ENCODE measurements at regions of chr15 and their contacts with region 1.

Region 1: DNA sequence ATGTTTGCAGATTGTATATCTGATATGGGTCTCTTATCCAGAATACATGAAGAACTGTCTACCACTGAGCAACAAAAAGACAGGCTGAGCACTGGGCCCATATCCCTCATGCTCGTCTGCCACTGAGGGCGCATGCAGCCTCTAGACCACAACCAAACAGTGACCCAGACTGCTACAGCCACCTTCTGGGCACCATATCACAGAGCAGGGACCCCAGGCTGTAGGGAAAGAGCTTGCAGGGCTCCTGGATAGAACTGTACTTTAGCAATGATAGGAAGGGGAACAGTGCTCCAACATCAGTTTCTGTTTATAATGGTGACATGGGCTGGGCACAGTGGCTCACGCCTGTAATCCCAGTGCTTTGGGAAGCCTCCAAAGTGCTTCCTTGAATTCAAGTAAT is 40.2 kb upstream of the TMEM87A start:
- DNase-seq: no peak
- H3K4me3 ChIP-seq: no peak overlapping the region
- H3K27ac ChIP-seq: no peak overlapping the region
- H3K4me1 ChIP-seq: no peaks in the 10 kb centered on the region
- H3K27me3 ChIP-seq: no peaks in the 10 kb centered on the region
- CTCF ChIP-seq: no peak
- POLR2A ChIP-seq: no peak

Region 2: DNA sequence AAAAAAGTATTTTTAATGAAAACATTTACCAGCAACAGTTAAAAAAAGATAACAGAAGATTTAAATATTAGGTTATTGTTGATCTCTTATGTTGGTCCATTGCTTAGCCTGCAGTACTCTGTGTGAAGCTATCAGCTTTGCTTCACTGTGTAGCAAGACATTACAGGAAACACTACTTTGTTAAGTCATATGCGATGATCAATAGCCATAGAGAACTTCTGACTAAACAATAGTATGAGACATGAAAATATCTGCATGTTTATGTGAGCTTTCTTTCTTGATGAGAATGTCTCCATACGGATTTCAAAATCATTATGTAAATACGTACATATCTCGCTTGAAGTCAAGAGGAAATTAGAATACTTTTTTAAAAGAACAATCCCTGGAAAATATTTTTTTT is 18.9 kb after region 1 on chr15:
- intact Hi-C with region 1: no loop called
- DNase-seq: no peak
- H3K4me3 ChIP-seq: no peak overlapping the region
- H3K27ac ChIP-seq: no peak overlapping the region
- H3K4me1 ChIP-seq: no peaks in the 10 kb centered on the region
- H3K27me3 ChIP-seq: no peaks in the 10 kb centered on the region
- CTCF ChIP-seq: no peak
- POLR2A ChIP-seq: no peak

Region 3: GRCh38 chr15:42344763-42345162 is 31.3 kb after region 1 on chr15:
- intact Hi-C with region 1: no loop called
- DNase-seq: no peak
- H3K4me3 ChIP-seq: no peak overlapping the region
- H3K27ac ChIP-seq: peak overlapping the region; percentile 33 to 74
- H3K4me1 ChIP-seq: no peaks in the 10 kb centered on the region
- H3K27me3 ChIP-seq: no peaks in the 10 kb centered on the region
- CTCF ChIP-seq: no peak
- POLR2A ChIP-seq: no peak

Region 4: DNA sequence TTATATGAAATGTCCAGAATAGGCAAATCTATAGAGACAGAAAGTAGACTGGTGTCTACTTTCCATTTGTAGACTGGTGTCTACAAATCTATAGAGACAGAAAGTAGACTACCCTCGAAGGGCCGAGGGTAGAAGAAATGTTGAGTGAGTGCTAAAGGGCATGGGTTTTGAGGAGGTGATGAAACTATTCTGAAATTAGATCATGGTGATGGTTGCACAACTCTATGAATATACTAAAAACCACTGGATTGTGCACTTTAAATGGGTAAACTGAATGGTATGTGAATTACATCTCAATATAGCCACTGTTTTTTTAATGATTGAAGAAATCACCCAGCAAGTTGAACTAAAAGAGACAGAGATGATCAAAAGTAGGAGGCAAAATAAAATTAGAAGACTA is 1151.6 kb after region 1 on chr15:
- intact Hi-C with region 1: loop called (anchors 10 kb)
- DNase-seq: no peak
- H3K4me3 ChIP-seq: no peak overlapping the region
- H3K27ac ChIP-seq: no peak overlapping the region
- H3K4me1 ChIP-seq: no peaks in the 10 kb centered on the region
- H3K27me3 ChIP-seq: no peaks in the 10 kb centered on the region
- CTCF ChIP-seq: no peak
- POLR2A ChIP-seq: no peak

Measured in breast epithelium (tissue), 4 donors.